ENCODE measurements at regions of chr5 and their contacts with region 1.

Region 1: DNA sequence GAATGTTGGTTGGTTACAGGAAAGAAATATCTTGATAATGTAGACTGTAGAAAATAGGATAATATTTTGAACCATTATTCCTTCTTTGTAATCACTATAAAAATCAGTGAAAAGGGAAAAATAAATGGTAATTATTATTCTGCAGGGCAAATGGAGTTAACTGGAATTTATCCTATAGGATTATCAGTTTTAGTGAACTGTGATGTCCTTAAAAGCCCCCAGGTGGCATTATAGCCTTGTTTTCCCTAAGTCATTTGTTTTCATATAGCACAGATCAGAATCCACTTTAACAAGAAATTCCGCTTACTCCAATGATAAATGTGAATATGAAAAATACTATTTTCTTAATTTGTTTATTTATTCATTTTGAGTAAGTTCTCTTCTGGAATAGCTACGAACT is 26.2 kb upstream of the WDR41 start:
- DNase-seq: peak; percentile 6
- H3K4me3 Mint-ChIP-seq: no peak overlapping the region
- H3K27ac Mint-ChIP-seq: no peak overlapping the region
- H3K4me1 Mint-ChIP-seq: no peaks in the 10 kb centered on the region
- H3K27me3 Mint-ChIP-seq: peaks cover 19% of the 10 kb centered on the region
- CTCF ChIP-seq: no peak

Region 2: GRCh38 chr5:77266291-77266690 is 252.0 kb before region 1 on chr5:
- CTCF ChIA-PET with region 1: no interaction called
- intact Hi-C with region 1: no loop called
- DNase-seq: no peak
- H3K4me3 Mint-ChIP-seq: no peak overlapping the region
- H3K27ac Mint-ChIP-seq: no peak overlapping the region
- H3K4me1 Mint-ChIP-seq: no peaks in the 10 kb centered on the region
- H3K27me3 Mint-ChIP-seq: peaks cover 27% of the 10 kb centered on the region
- CTCF ChIP-seq: no peak

Region 3: DNA sequence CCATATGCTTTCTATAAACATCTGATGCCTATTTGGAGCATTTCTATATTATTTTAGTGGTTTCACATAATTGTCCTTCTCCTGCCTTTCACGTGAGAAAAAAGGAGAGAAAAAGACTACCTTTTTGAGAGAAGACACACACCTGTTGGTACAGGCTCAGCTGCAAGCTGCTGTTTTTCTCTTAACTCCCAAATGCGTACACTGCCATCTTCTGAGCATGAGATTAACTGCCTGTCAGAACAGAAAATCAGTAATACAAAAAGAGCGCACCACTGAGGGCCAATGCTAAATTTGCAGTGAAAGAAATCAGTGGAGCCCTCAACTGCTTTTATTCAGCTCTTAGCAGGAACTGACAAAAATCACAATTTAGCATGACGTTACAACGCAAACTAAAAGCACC is 81.1 kb before region 1 on chr5:
- CTCF ChIA-PET with region 1: no interaction called
- intact Hi-C with region 1: no loop called
- DNase-seq: no peak
- H3K4me3 Mint-ChIP-seq: no peak overlapping the region
- H3K27ac Mint-ChIP-seq: no peak overlapping the region
- H3K4me1 Mint-ChIP-seq: no peaks in the 10 kb centered on the region
- H3K27me3 Mint-ChIP-seq: no peaks in the 10 kb centered on the region
- CTCF ChIP-seq: no peak

Region 4: GRCh38 chr5:77463905-77464304 is 54.4 kb before region 1 on chr5:
- CTCF ChIA-PET with region 1: no interaction called
- intact Hi-C with region 1: no loop called
- DNase-seq: no peak
- H3K4me3 Mint-ChIP-seq: no peak overlapping the region
- H3K27ac Mint-ChIP-seq: peak overlapping the region; percentile 42
- H3K4me1 Mint-ChIP-seq: peaks cover 6% of the 10 kb centered on the region
- H3K27me3 Mint-ChIP-seq: no peaks in the 10 kb centered on the region
- CTCF ChIP-seq: no peak

Region 5: GRCh38 chr5:77806213-77806843 is 288.0 kb after region 1 on chr5:
- CTCF ChIA-PET with region 1: no interaction called
- intact Hi-C with region 1: no loop called
- DNase-seq: no peak
- H3K4me3 Mint-ChIP-seq: peak overlapping the region; percentile 3
- H3K27ac Mint-ChIP-seq: no peak overlapping the region
- H3K4me1 Mint-ChIP-seq: peaks cover 9% of the 10 kb centered on the region
- H3K27me3 Mint-ChIP-seq: peaks cover 7% of the 10 kb centered on the region
- CTCF ChIP-seq: no peak

Region 6: GRCh38 chr5:78008356-78008967 is 490.2 kb after region 1 on chr5:
- CTCF ChIA-PET with region 1: no interaction called
- intact Hi-C with region 1: loop called (anchors 1 kb)
- DNase-seq: peak; percentile 29
- H3K4me3 Mint-ChIP-seq: no peak overlapping the region
- H3K27ac Mint-ChIP-seq: no peak overlapping the region
- H3K4me1 Mint-ChIP-seq: peaks cover 12% of the 10 kb centered on the region
- H3K27me3 Mint-ChIP-seq: no peaks in the 10 kb centered on the region
- CTCF ChIP-seq: peak; percentile 71

Region 7: DNA sequence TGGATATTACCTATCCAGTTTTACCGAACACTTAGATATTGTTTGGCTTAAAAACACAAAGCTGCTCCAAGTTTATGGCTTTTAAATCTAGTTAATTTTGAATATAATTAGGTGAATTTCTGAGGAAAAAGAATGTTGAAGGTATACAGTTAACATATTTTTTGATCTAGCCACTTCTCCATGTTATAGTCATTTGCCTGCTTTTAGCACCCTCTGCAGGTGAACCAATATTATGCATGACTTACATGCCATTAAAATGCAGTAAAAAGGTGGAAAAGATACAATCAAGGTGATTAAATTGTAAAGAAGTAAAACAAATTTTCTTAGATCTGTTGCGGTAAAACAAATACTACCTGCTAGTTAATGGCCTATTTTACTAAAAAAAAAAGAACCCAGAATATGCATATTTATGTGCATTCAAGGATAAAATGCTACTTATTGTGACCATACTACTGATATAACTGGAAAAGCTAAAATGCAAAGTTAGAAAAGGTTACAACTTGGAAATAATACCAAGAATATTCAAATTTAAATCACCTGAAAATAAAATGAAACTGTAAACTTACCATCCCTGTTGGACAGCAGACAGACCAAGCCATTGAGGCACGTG is 644.1 kb after region 1 on chr5:
- CTCF ChIA-PET with region 1: no interaction called
- intact Hi-C with region 1: loop called (anchors 10 kb)
- DNase-seq: peak; percentile 35
- H3K4me3 Mint-ChIP-seq: no peak overlapping the region
- H3K27ac Mint-ChIP-seq: no peak overlapping the region
- H3K4me1 Mint-ChIP-seq: no peaks in the 10 kb centered on the region
- H3K27me3 Mint-ChIP-seq: no peaks in the 10 kb centered on the region
- CTCF ChIP-seq: peak; percentile 32

Measured in Calu3 (cell line).